ENCODE measurements at regions of chr1 and their contacts with region 1.

Region 1: GRCh38 chr1:36650200-36651065 is 167.7 kb upstream of the CSF3R start:
- DNase-seq: peak; percentile 70
- CTCF ChIP-seq: peak; percentile 74

Region 2: GRCh38 chr1:36638268-36638667 is 12.2 kb before region 1 on chr1:
- CTCF ChIA-PET with region 1: interaction called, 21 read pairs
- POLR2A ChIA-PET with region 1: no interaction called
- DNase-seq: no peak
- CTCF ChIP-seq: no peak

Region 3: DNA sequence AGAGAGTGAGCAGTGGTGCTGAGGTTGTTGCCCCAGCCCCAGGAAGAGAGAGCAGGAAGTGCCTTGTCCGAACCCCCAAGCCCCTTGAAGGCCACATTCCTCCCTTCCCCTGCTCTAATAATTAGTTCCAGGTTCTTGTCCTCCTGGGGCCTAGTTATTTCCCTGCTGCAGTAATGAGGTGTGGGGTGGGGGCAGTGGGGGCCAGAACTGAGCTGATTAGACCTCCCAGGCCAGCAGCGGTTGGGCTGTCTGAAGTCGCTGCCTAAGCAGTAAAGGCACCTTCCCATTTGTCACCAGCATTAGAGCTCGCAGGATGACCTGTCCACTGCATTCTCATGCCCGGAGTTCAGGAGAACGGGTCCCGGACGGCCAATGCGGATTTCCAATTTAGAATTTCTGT is 18.8 kb after region 1 on chr1:
- CTCF ChIA-PET with region 1: interaction called, 21 read pairs
- POLR2A ChIA-PET with region 1: no interaction called
- DNase-seq: no peak
- CTCF ChIP-seq: no peak

Region 4: DNA sequence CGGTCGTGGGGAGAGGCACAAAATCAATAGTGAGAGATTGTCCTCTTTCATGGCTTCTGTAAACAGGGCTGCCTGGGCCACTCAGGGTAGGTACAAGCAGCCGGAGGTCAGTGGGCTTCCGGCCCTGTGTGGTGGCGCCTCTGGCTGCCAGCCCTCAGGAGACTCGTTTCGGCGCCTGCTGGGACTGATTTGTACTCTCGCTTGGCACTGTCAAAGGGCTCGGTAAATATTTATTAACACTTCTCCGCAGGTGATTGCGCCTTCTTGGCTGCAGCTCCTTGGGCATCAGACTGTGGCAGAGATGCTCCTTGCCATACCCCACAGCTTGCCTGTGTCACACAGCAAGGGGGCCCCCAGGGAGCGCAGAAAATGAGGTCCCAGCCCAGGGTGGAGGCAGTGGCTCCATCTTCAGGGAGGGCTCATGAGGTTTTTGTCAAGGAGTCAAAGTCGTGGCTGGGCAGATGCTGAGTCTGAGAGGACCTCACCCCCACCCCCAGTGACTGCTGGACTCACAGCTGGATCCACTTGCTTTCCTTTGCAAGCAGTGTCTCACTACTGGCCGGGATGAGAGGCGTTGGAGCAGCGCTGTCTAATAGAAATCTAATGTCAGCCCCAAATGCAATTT is 121.3 kb after region 1 on chr1:
- CTCF ChIA-PET with region 1: no interaction called
- POLR2A ChIA-PET with region 1: no interaction called
- DNase-seq: no peak
- CTCF ChIP-seq: no peak

Measured in GM10248 (cell line).